Transverse colon (tissue), 4 donors: ENCODE measurements at regions of chr11 and their contacts with region 1.

Region 1: GRCh38 chr11:85540635-85541205 is 86.4 kb downstream of the DLG2 start:
- DNase-seq: no peak
- H3K4me3 ChIP-seq: no peak overlapping the region
- H3K27ac ChIP-seq: no peak overlapping the region
- H3K4me1 ChIP-seq: no peaks in the 10 kb centered on the region
- H3K27me3 ChIP-seq: no peaks in the 10 kb centered on the region
- CTCF ChIP-seq: no peak
- EP300 ChIP-seq: no peak
- POLR2A ChIP-seq: no peak

Region 2: GRCh38 chr11:85525686-85526085 is 15.0 kb before region 1 on chr11:
- in situ Hi-C with region 1: no loop called
- intact Hi-C with region 1: loop called (anchors 1 kb)
- DNase-seq: no peak
- H3K4me3 ChIP-seq: no peak overlapping the region
- H3K27ac ChIP-seq: no peak overlapping the region
- H3K4me1 ChIP-seq: no peaks in the 10 kb centered on the region
- H3K27me3 ChIP-seq: no peaks in the 10 kb centered on the region
- CTCF ChIP-seq: no peak
- EP300 ChIP-seq: no peak
- POLR2A ChIP-seq: no peak